IMR-90 (cell line): ENCODE measurements at regions of chr3 and their contacts with region 1.

Region 1: DNA sequence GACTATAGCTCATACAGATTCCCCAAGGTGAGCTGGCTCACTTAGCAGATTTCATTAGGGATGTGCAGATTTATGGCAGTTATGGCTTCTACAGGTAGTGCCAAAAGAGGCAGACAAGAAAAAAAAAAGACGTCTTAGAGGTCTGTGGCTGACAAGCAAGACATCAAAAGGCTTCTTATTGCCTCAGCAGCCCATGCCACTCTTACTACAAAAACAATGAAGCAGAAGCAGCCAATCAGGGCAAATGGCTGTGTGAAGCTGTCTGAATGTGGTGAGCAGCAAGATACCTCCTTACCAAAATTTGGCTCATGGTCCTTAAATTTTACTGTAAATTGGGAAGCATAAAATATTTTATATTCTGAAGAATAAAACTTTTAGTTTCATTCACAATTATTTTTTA is 557.5 kb upstream of the GOLIM4 start:
- DNase-seq: no peak
- ATAC-seq: no peak
- H3K4me3 ChIP-seq: no peak overlapping the region
- H3K27ac ChIP-seq: no peak overlapping the region
- H3K4me1 ChIP-seq: peaks cover 2% of the 10 kb centered on the region; the same call in 1 of the 2 replicates
- H3K27me3 ChIP-seq: no peaks in the 10 kb centered on the region
- CTCF ChIP-seq: no peak
- POLR2A ChIP-seq: no peak
- RAD21 ChIP-seq: no peak

Region 2: DNA sequence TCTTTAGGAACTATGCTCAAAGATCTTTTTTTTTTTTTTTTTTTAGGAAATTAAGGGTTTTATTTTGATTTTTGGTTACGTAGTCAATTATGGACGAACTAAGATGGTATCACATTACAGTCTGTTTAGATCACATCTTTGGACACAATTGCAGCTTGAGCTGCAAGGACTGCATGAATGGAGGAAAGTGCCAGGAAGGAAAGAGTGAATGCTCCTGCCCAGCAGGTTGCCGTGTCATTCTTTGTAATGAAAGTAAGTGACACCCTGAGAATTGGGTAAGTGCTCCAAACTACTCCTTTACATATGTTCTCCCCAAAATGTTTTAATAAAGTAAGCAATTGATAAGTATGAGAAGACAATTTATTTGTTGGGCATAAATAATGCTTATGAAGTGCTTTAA is 159.0 kb after region 1 on chr3:
- CTCF ChIA-PET with region 1: no interaction called
- POLR2A ChIA-PET with region 1: no interaction called
- dilution Hi-C with region 1: no loop called
- in situ Hi-C with region 1: no loop called
- intact Hi-C with region 1: no loop called
- DNase-seq: no peak
- ATAC-seq: no peak
- H3K4me3 ChIP-seq: no peak overlapping the region
- H3K27ac ChIP-seq: no peak overlapping the region
- H3K4me1 ChIP-seq: peaks cover 3% of the 10 kb centered on the region; the same call in 1 of the 2 replicates
- H3K27me3 ChIP-seq: no peaks in the 10 kb centered on the region
- CTCF ChIP-seq: no peak
- POLR2A ChIP-seq: no peak
- RAD21 ChIP-seq: no peak

Region 3: GRCh38 chr3:168828943-168829342 is 175.7 kb after region 1 on chr3:
- CTCF ChIA-PET with region 1: no interaction called
- POLR2A ChIA-PET with region 1: no interaction called
- dilution Hi-C with region 1: no loop called
- in situ Hi-C with region 1: no loop called
- intact Hi-C with region 1: loop called (anchors 5 kb)
- DNase-seq: no peak
- ATAC-seq: no peak
- H3K4me3 ChIP-seq: no peak overlapping the region
- H3K27ac ChIP-seq: no peak overlapping the region
- H3K4me1 ChIP-seq: no peaks in the 10 kb centered on the region
- H3K27me3 ChIP-seq: no peaks in the 10 kb centered on the region
- CTCF ChIP-seq: no peak
- POLR2A ChIP-seq: no peak
- RAD21 ChIP-seq: no peak